AG04450 (cell line): ENCODE measurements at regions of chr1 and their contacts with region 1.

Region 1: DNA sequence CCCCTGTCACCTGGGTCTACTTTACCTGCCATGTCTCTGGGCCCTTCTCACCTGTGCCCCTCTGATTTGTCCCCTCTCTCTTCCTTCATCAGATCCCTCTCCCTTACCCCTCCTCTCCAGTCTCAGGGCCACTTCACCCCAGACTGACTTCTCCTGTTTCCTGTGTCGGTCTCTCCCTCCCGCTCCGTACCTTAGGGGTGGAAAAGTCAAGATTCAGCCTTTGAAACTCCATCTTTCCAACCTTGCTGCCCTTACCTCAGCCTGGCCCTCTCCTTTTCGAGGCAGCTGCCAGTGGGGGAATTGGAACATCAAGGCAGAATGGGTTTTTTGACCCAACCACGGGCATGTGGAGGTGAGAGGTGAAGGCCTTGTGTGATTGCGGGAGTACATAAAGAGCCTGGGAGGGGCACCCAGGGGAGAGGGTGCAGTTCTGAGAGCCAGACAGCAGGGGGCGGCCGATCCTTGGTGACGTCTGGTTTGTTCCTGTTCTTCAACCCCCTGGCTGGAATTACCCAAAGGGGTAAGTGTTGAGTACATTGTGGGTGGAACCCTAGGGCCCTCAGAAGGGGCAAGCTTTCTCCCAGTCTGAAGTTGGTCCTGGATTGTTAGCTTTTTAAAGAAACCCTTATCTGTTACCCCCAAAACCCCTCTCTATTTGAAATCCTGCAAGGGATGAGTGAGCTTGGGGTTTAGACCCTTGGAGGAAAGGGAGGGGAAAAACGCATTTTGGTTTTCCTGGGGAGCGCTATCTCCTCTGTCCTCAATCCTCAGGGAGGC is 12.3 kb upstream of the DMBX1 start:
- DNase-seq: peak; percentile 24
- H3K4me3 ChIP-seq: no peak overlapping the region
- H3K27ac ChIP-seq: no peak overlapping the region
- H3K27me3 ChIP-seq: peaks cover 82% of the 10 kb centered on the region
- CTCF ChIP-seq: peak; percentile 90

Region 2: GRCh38 chr1:46466477-46467182 is 10.7 kb before region 1 on chr1:
- CTCF ChIA-PET with region 1: no interaction called
- POLR2A ChIA-PET with region 1: no interaction called
- DNase-seq: no peak
- H3K4me3 ChIP-seq: peak overlapping the region; percentile 48
- H3K27ac ChIP-seq: no peak overlapping the region
- H3K27me3 ChIP-seq: peaks cover 73% of the 10 kb centered on the region
- CTCF ChIP-seq: no peak

Region 3: DNA sequence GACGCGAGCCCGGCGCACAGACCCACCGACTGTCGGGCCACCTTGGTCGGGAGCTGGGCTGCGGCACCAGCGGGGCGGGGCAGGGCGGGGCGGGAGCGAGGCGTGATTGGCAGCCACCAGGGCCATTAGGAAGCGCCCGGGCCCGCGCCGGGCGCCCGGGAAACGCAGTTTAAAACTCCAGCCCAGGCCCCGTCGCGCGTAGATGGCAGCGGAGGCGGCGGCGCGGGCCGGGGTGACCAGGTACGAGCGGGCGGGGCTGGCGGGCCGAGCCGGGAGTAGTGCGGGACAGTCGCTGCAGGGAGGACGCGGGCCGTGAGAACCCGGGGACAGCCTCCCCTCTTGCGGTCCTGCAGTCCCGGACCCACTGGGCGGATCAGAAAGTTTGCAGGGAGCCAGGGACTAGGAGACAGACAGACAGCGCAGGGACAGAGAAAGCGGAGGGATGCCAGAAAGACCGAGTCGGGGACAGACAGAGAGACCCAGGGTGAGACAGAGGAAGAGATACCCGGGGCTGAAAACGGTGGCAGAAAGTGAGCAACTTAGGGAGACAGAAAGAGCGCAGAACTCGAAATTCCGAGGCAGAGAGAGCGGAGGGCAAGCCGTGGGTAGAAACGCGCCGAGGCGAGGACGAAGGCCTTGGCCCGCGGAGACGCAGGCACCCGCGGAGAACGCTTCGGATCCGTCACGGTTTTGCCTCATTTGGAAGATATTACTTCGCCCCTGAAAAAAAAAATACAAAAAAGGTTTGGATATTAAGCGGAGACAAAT is 12.5 kb after region 1 on chr1 and contains the start of gene DMBX1:
- CTCF ChIA-PET with region 1: interaction called, 16 read pairs
- POLR2A ChIA-PET with region 1: no interaction called
- DNase-seq: no peak
- H3K4me3 ChIP-seq: no peak within 1 kb of the TSS
- H3K27ac ChIP-seq: no peak within 1 kb of the TSS
- H3K27me3 ChIP-seq: peaks cover 95% of the 10 kb centered on the region
- CTCF ChIP-seq: no peak
- polyA plus RNA-seq, gene DMBX1: not detected in 2 replicates

Region 4: GRCh38 chr1:46508757-46509156 is 31.4 kb after region 1 on chr1:
- CTCF ChIA-PET with region 1: no interaction called
- POLR2A ChIA-PET with region 1: no interaction called
- DNase-seq: no peak
- H3K4me3 ChIP-seq: no peak overlapping the region
- H3K27ac ChIP-seq: no peak overlapping the region
- H3K27me3 ChIP-seq: peaks cover 5% of the 10 kb centered on the region
- CTCF ChIP-seq: no peak

Region 5: GRCh38 chr1:46522184-46522968 is 45.0 kb after region 1 on chr1:
- CTCF ChIA-PET with region 1: interaction called, 111 read pairs
- POLR2A ChIA-PET with region 1: no interaction called
- DNase-seq: no peak
- H3K4me3 ChIP-seq: no peak overlapping the region
- H3K27ac ChIP-seq: peak overlapping the region; percentile 21
- H3K27me3 ChIP-seq: peaks cover 25% of the 10 kb centered on the region
- CTCF ChIP-seq: no peak

Region 6: DNA sequence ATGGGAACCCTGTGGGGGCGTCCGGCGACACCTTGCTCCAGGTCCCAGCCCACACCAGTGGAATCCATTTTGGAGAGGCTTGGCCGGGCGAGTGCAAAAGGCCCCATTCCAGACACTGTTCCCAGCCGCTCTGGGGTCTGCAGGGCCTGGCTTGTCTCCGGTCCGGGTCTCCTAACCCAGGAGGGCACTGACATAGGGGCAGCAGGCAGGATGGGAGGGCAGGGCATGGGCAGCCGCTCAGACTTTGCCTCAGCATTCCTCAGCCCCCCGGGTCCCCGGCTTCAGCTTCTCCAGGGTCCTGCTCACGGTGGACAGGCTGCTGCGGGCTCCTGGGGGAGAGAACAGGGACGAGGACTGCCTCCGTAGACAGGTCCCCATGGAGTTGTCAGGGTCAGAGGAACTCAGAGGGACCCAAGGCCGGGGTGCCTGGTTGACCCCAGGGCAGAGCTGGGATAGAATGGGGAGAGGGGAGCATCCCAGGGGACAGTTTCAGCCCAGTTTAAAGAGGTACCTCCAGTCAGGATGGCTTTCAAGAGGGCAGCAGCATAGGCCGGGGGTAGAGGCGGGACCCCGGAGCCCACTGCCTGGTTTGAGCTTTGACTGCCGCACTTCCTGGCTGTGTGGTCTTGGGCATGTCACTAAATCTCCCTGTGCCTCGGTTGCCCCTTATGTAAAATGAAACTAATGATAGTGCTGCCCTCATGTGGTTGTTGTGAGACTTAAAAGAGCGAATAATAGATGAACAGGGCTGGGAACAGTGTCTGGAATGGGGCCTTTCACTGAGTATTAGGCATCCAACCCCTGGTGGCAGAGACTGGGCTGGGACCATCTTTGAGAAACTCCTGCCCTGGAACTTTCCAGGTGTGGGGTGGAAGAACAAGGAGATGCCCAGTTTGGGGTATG is 70.4 kb after region 1 on chr1:
- CTCF ChIA-PET with region 1: interaction called, 10 read pairs
- POLR2A ChIA-PET with region 1: no interaction called
- DNase-seq: no peak
- H3K4me3 ChIP-seq: peak overlapping the region; percentile 17; the same call in 1 of the 2 replicates
- H3K27ac ChIP-seq: no peak overlapping the region
- H3K27me3 ChIP-seq: peaks cover 63% of the 10 kb centered on the region
- CTCF ChIP-seq: peak; percentile 57

Region 7: DNA sequence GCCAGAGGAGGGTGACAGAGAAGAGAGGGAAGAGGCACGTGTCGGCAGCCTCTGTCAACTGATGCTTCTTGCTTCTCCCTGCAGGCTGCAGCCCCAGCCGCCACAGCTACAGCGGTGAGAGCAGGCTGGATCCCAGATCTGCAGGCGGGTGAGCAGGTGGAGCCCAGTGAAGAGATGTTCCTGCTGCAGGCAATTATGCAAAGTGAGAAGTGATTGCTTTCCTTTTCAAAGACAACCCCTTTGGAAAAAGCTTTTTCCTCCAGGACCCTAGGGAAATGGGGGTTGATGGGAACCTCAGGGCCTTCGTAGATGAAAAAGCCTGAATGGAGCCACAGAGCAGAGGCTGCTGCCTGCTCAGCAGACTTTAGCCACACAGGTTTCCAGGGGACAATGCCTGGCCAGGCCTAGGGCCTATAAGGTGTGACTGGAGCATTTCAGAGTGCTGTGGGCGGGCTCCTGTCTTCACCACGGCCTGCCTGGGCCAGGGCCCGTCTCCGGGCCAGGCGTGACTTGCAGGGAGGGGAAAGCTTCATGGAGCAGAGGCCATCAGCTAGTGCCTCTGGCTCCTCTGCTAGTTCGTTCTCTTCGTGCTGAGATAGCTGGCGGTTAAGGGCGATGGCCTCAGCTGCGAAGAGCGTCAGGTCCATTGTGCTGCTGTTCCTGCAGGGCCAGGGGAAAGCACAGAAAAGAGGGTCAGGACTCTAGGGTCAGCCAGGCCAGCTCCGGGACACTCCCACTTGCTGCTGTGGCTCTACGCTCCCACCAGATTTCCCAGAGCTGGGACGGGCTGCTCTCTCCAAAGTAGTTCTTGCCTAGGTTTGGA is 81.0 kb after region 1 on chr1:
- CTCF ChIA-PET with region 1: no interaction called
- POLR2A ChIA-PET with region 1: no interaction called
- DNase-seq: no peak
- H3K4me3 ChIP-seq: no peak overlapping the region
- H3K27ac ChIP-seq: no peak overlapping the region
- H3K27me3 ChIP-seq: peaks cover under 1% of the 10 kb centered on the region
- CTCF ChIP-seq: no peak

Region 8: GRCh38 chr1:46569884-46570725 is 92.8 kb after region 1 on chr1:
- CTCF ChIA-PET with region 1: no interaction called
- POLR2A ChIA-PET with region 1: no interaction called
- DNase-seq: peak; percentile 8
- H3K4me3 ChIP-seq: no peak overlapping the region
- H3K27ac ChIP-seq: no peak overlapping the region
- H3K27me3 ChIP-seq: no peaks in the 10 kb centered on the region
- CTCF ChIP-seq: no peak